Transverse colon (tissue), 4 donors: ENCODE measurements at regions of chr22 and their contacts with region 1.

Region 1: DNA sequence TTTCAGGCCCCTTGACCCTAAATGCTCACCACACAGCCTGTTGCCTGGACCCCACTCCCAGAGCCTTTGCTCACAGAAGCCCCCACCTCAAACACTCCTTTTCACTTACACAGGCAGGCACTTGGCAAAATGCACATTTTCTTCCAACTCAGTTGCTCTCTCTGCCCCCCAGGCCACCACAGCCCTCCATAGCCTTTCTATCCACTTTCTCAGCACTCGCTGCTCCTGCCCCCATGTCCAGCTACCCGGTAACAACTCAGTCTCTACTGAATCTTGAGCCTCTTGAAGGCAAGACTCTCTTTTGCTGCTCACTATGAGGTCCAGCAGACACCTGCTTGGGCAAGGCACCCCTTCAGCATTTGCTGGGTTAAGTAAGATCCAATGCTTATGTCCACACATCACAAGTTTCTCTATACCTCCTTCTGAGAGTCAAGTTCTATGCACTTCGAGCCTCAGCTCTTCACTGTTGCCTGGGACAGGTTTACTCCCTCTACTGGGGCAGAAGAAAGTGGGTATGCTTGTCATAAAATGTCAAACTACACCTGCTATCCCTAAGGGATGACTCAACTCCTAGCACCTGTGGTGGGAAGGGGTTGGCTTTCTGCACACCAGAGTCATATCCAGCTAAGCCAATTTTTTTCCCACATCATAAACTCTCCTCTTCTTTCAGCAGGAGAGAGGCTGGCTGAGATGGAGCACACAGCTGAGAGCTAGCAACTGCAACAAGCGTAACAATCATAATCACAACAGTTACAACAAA is 36.9 kb downstream of the MORC2 start:
- DNase-seq: no peak
- H3K4me3 ChIP-seq: no peak overlapping the region
- H3K27ac ChIP-seq: no peak overlapping the region
- H3K4me1 ChIP-seq: no peaks in the 10 kb centered on the region
- H3K27me3 ChIP-seq: no peaks in the 10 kb centered on the region
- CTCF ChIP-seq: no peak
- EP300 ChIP-seq: no peak
- POLR2A ChIP-seq: no peak

Region 2: GRCh38 chr22:30979932-30980331 is 48.2 kb after region 1 on chr22:
- in situ Hi-C with region 1: no loop called
- intact Hi-C with region 1: loop called (anchors 10 kb)
- DNase-seq: no peak
- H3K4me3 ChIP-seq: no peak overlapping the region
- H3K27ac ChIP-seq: no peak overlapping the region
- H3K4me1 ChIP-seq: no peaks in the 10 kb centered on the region
- H3K27me3 ChIP-seq: no peaks in the 10 kb centered on the region
- CTCF ChIP-seq: no peak
- EP300 ChIP-seq: no peak
- POLR2A ChIP-seq: no peak